ENCODE measurements at regions of chr16 and their contacts with region 1.

Region 1: GRCh38 chr16:4846891-4847773 is at the starts of genes GLYR1 and UBN1:
- DNase-seq: peak; percentile 99 to 100 (median 99)
- H3K4me3 ChIP-seq: peak within 1 kb of the TSS; percentile 63
- H3K27ac ChIP-seq: peak within 1 kb of the TSS; percentile 93 to 96
- H3K4me1 ChIP-seq: peaks cover 8% of the 10 kb centered on the region
- H3K27me3 ChIP-seq: no peaks in the 10 kb centered on the region
- CTCF ChIP-seq: peak in 1 of 3 donors; percentile 3
- EP300 ChIP-seq: no peak
- POLR2A ChIP-seq: peak; percentile 80
- total RNA-seq, gene GLYR1: 30.3 to 79.5 (median 69.7) TPM
- total RNA-seq, gene UBN1: 16.1 to 41.3 (median 27.3) TPM

Region 2: DNA sequence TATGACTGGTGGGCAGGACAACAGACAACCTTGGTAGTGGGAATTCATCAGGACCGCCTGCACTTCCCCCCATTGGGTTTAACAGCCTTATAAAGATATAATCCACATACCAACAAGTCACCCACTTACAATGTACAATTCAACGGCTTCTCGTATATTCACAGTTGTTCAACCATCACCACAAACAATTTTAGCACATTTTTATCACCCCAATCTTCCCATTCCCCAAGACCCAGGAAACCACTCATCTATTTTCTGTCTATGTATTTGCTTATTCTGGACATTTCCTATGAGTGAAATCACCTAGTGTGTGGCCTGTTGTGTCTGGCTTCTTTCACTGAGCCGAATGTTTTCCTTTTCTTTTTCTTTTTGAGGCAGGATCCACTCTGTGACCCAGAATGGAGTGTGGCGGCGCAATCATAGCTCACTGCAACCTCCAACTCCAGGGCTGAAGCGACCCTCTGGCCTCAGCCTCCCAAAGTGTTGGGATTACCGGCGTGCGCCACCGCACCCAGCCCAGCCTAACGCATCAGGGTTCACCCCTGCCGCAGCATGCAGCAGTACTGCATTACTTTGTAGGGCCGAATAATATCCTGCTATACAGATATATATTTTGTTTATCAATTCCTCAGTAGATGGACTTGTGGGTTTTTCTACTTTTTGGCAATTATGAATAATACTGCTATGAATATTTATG is 123.9 kb before region 1 on chr16:
- intact Hi-C with region 1: loop called in 1 of 4 experiments (anchors 10 kb)
- DNase-seq: no peak
- H3K4me3 ChIP-seq: no peak overlapping the region
- H3K27ac ChIP-seq: no peak overlapping the region
- H3K4me1 ChIP-seq: no peaks in the 10 kb centered on the region
- H3K27me3 ChIP-seq: no peaks in the 10 kb centered on the region
- CTCF ChIP-seq: no peak
- EP300 ChIP-seq: no peak
- POLR2A ChIP-seq: no peak

Region 3: DNA sequence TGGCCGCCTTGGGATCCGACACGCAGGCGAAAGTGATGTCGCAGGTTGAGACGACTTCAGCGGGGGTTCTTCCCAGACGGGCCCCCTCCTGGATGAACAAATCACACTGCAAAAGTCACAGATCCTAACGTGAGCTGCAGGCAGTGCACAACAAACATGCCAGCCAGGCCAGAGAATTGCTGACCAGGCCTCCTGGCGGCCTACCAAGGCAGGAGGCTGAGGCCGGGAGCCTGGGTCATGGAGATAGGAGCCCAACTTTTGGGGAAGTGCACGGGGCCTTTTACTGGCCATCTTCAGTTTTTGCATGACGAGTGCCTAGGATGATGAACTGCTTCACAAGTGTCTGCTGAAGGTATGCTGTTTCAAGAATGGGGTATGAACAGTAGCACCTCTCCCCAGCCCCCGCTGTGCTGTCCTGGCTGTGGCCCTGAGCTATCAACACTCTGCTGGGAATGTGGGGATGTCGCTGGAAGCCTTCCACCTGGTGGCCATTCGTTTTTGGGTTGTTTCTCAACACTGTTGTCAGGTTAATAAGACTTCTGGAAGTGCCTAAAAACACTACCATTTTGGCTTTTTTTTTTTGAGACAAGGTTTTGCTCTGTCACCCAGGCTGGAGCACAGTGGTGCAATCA is 32.5 kb before region 1 on chr16:
- intact Hi-C with region 1: no loop called
- DNase-seq: peak in 2 of 5 donors; percentile 51 to 63
- H3K4me3 ChIP-seq: no peak overlapping the region
- H3K27ac ChIP-seq: no peak overlapping the region
- H3K4me1 ChIP-seq: no peaks in the 10 kb centered on the region
- H3K27me3 ChIP-seq: no peaks in the 10 kb centered on the region
- CTCF ChIP-seq: no peak
- EP300 ChIP-seq: no peak
- POLR2A ChIP-seq: no peak